ENCODE measurements at regions of chr3 and their contacts with region 1.

Region 1: GRCh38 chr3:33047842-33048834 is 48.8 kb downstream of the GLB1 start:
- DNase-seq: peak; percentile 81 to 90 (median 86)
- H3K4me3 ChIP-seq: peak overlapping the region in 1 of 2 donors; percentile 47
- H3K4me3 Mint-ChIP-seq: peak overlapping the region; percentile 70 to 95 (median 86)
- H3K27ac ChIP-seq: peak overlapping the region; percentile 36
- H3K27ac Mint-ChIP-seq: peak overlapping the region; percentile 90 to 99 (median 98)
- H3K4me1 ChIP-seq: peaks cover 89% of the 10 kb centered on the region
- H3K4me1 Mint-ChIP-seq: peaks cover 62 to 86% (median 78%) of the 10 kb centered on the region in 4 donors
- H3K27me3 ChIP-seq: no peaks in the 10 kb centered on the region
- H3K27me3 Mint-ChIP-seq: no peaks in the 10 kb centered on the region

Region 2: DNA sequence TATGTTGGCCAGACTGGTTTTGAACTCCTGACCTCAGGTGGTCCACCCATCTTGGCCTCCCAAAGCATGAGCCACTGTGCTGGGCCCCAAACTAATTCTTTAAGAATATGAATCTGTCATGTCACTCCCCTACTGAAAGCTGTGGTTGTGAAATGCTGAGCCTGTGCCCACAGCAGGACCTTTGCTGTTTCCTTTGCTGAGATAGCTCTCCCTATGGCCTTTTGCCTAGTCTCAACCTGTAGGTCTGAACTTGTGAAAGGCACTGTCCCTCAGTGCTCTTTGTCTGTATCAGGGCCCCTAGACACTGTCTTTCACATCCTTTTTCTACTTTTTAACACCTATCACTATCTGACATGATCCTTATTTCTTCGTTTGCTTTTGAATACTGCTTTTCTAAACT is 159.4 kb before region 1 on chr3:
- CTCF ChIA-PET with region 1: no interaction called
- POLR2A ChIA-PET with region 1: no interaction called
- intact Hi-C with region 1: no loop called
- DNase-seq: no peak
- H3K4me3 ChIP-seq: no peak overlapping the region
- H3K4me3 Mint-ChIP-seq: no peak overlapping the region
- H3K27ac ChIP-seq: no peak overlapping the region
- H3K27ac Mint-ChIP-seq: no peak overlapping the region
- H3K4me1 ChIP-seq: no peaks in the 10 kb centered on the region
- H3K4me1 Mint-ChIP-seq: no peaks in the 10 kb centered on the region
- H3K27me3 ChIP-seq: no peaks in the 10 kb centered on the region
- H3K27me3 Mint-ChIP-seq: no peaks in the 10 kb centered on the region

Region 3: GRCh38 chr3:32973982-32974381 is 74.2 kb before region 1 on chr3:
- CTCF ChIA-PET with region 1: interaction called, 3 read pairs
- POLR2A ChIA-PET with region 1: interaction called, 12 read pairs
- intact Hi-C with region 1: no loop called
- DNase-seq: peak; percentile 54 to 72 (median 62)
- H3K4me3 ChIP-seq: no peak overlapping the region
- H3K4me3 Mint-ChIP-seq: peak overlapping the region in 7 of 8 donors; percentile 47 to 85 (median 72)
- H3K27ac ChIP-seq: peak overlapping the region; percentile 14
- H3K27ac Mint-ChIP-seq: peak overlapping the region; percentile 62 to 93 (median 87)
- H3K4me1 ChIP-seq: peaks cover 48% of the 10 kb centered on the region
- H3K4me1 Mint-ChIP-seq: peaks cover 40 to 66% (median 46%) of the 10 kb centered on the region in 4 donors
- H3K27me3 ChIP-seq: no peaks in the 10 kb centered on the region
- H3K27me3 Mint-ChIP-seq: no peaks in the 10 kb centered on the region

Region 4: GRCh38 chr3:33023172-33024136 is 24.7 kb before region 1 on chr3:
- CTCF ChIA-PET with region 1: interaction called, 159 read pairs
- POLR2A ChIA-PET with region 1: interaction called, 687 read pairs
- intact Hi-C with region 1: loop called (anchors 1 kb)
- DNase-seq: peak in 4 of 5 donors; percentile 50 to 71 (median 58)
- H3K4me3 ChIP-seq: no peak overlapping the region
- H3K4me3 Mint-ChIP-seq: peak overlapping the region; percentile 10 to 81 (median 70)
- H3K27ac ChIP-seq: peak overlapping the region; percentile 34
- H3K27ac Mint-ChIP-seq: peak overlapping the region; percentile 87 to 96 (median 92)
- H3K4me1 ChIP-seq: peaks cover 62% of the 10 kb centered on the region
- H3K4me1 Mint-ChIP-seq: peaks cover 48 to 76% (median 58%) of the 10 kb centered on the region in 4 donors
- H3K27me3 ChIP-seq: no peaks in the 10 kb centered on the region
- H3K27me3 Mint-ChIP-seq: no peaks in the 10 kb centered on the region

Region 5: DNA sequence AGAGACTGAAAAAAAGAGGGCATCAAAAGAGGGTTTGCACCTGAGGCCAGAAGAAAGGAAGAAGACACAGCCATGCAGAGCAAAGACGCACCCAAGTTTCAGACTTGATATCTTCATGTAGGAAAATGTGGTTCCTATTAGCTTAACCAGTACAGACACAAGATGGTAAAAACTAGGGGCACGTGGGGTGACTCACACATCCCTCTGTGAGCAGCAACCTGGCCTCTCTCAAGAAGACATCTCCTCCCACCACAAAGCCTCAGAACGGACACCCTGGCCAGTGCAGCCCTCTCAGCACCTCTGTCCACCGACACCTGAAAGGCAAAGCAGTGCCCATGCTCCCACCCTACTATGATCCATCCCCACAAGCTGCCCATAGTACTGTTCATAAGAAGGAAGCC is 15.5 kb after region 1 on chr3:
- CTCF ChIA-PET with region 1: interaction called, 145 read pairs
- POLR2A ChIA-PET with region 1: interaction called, 687 read pairs
- intact Hi-C with region 1: loop called (anchors 1 kb)
- DNase-seq: peak; percentile 48 to 84 (median 49)
- H3K4me3 ChIP-seq: no peak overlapping the region
- H3K4me3 Mint-ChIP-seq: peak overlapping the region; percentile 7 to 86 (median 78)
- H3K27ac ChIP-seq: peak overlapping the region; percentile 71
- H3K27ac Mint-ChIP-seq: peak overlapping the region; percentile 89 to 100 (median 99)
- H3K4me1 ChIP-seq: peaks cover 83% of the 10 kb centered on the region
- H3K4me1 Mint-ChIP-seq: peaks cover 60 to 91% (median 73%) of the 10 kb centered on the region in 4 donors
- H3K27me3 ChIP-seq: no peaks in the 10 kb centered on the region
- H3K27me3 Mint-ChIP-seq: no peaks in the 10 kb centered on the region

Region 6: DNA sequence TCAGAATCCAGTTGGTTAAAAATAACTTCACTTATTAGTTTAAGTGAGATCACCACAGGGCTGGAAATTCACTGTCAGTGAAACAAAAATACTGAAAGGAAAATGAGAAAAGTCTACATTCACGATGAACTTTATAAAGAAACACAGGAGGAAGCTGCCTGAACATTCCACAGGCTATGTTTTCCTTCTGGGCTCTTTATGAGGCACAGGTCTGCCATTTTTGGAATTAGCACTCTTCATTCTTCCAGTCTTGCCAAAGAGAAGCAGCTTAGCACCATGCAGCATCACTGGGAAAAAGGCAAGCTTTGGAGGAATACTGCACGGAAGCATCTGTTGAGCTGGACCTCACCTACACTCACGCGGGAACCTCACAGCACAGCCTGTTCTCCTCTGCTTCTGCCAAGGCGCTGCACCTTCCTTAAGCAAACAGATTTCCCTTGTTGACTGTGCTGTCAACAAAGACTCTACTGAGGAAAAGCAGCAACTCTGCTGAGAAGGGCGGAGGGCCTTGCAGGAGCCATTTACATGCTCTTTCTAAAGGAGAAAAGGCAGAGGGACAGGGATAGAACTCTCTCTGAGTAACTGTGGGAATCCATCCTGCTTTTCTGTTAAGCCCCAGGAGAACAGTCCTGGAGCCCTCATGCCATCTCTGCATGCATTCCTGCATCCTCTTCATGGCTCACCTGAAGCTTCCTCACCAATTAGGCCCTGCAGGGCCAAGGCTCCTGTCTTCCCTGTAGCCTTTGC is 154.7 kb after region 1 on chr3:
- CTCF ChIA-PET with region 1: no interaction called
- POLR2A ChIA-PET with region 1: no interaction called
- intact Hi-C with region 1: no loop called
- DNase-seq: no peak
- H3K4me3 ChIP-seq: no peak overlapping the region
- H3K4me3 Mint-ChIP-seq: no peak overlapping the region
- H3K27ac ChIP-seq: no peak overlapping the region
- H3K27ac Mint-ChIP-seq: no peak overlapping the region
- H3K4me1 ChIP-seq: no peaks in the 10 kb centered on the region
- H3K4me1 Mint-ChIP-seq: no peaks in the 10 kb centered on the region
- H3K27me3 ChIP-seq: no peaks in the 10 kb centered on the region
- H3K27me3 Mint-ChIP-seq: peaks cover 3 to 5% of the 10 kb centered on the region in 2 donors

Region 7: DNA sequence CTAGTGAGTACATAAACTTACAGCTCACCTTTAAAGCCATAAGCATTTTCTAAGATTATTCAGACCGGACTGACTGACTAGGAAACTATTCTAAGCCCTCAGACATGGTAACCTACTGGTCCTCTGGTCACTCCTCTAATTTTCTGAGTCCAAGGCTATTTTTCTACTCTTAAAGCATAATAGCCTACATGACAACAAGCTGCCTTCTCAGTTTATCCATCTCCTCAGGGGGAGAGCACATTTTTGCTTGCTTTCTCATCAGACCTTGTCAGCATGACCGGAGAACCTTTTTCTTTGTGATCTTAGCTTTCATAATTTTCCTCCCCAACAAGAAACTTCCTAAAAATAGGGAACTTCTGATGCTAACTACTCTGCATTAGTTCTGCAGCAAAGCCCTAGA is 353.6 kb after region 1 on chr3:
- CTCF ChIA-PET with region 1: no interaction called
- POLR2A ChIA-PET with region 1: no interaction called
- intact Hi-C with region 1: no loop called
- DNase-seq: no peak
- H3K4me3 ChIP-seq: no peak overlapping the region
- H3K4me3 Mint-ChIP-seq: no peak overlapping the region
- H3K27ac ChIP-seq: no peak overlapping the region
- H3K27ac Mint-ChIP-seq: peak overlapping the region in 3 of 7 donors; percentile 22 to 48 (median 35)
- H3K4me1 ChIP-seq: no peaks in the 10 kb centered on the region
- H3K4me1 Mint-ChIP-seq: peaks cover 0 to 1% (median 0%) of the 10 kb centered on the region in 4 donors
- H3K27me3 ChIP-seq: no peaks in the 10 kb centered on the region
- H3K27me3 Mint-ChIP-seq: no peaks in the 10 kb centered on the region

Region 8: DNA sequence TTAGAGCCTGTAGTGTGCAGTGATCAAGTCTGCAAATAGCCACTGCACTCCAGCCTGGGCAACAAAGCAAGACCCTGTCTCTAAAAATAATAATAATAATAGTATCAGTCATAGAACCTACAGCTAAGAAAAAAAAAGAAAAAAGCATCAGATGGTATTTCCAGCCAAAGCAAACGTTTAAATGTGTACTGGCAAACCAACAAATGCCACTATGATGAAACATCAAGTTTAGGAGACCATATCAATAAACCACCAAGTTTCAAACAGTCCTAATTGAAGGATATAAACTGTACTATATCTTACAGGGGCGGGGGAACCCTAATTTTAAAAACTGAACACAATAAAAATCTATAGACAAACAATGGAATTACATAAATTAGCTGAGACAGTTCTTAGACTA is 385.7 kb after region 1 on chr3:
- CTCF ChIA-PET with region 1: no interaction called
- POLR2A ChIA-PET with region 1: no interaction called
- intact Hi-C with region 1: no loop called
- DNase-seq: no peak
- H3K4me3 ChIP-seq: no peak overlapping the region
- H3K4me3 Mint-ChIP-seq: peak overlapping the region in 4 of 8 donors; percentile 3 to 61 (median 30)
- H3K27ac ChIP-seq: no peak overlapping the region
- H3K27ac Mint-ChIP-seq: peak overlapping the region in 1 of 7 donors; percentile 58
- H3K4me1 ChIP-seq: peaks cover 90% of the 10 kb centered on the region
- H3K4me1 Mint-ChIP-seq: peaks cover 64 to 91% (median 77%) of the 10 kb centered on the region in 4 donors
- H3K27me3 ChIP-seq: no peaks in the 10 kb centered on the region
- H3K27me3 Mint-ChIP-seq: no peaks in the 10 kb centered on the region